Esophagus muscularis mucosa (tissue), 4 donors: ENCODE measurements at regions of chr12 and their contacts with region 1.

Region 1: GRCh38 chr12:29241821-29242591 is 92.9 kb downstream of the FAR2 start:
- DNase-seq: no peak
- H3K4me3 ChIP-seq: no peak overlapping the region
- H3K27ac ChIP-seq: peak overlapping the region; percentile 67 to 79 (median 74)
- H3K4me1 ChIP-seq: peaks cover 18 to 39% (median 37%) of the 10 kb centered on the region in 4 donors
- H3K27me3 ChIP-seq: no peaks in the 10 kb centered on the region
- CTCF ChIP-seq: peak in 2 of 3 experiments; percentile 20 to 44
- EP300 ChIP-seq: no peak
- POLR2A ChIP-seq: no peak

Region 2: GRCh38 chr12:29148911-29149690 is 92.9 kb before region 1 on chr12 and contains the start of gene FAR2:
- intact Hi-C with region 1: loop called (anchors 5 kb)
- DNase-seq: no peak
- H3K4me3 ChIP-seq: peak within 1 kb of the TSS; percentile 81 to 91 (median 88)
- H3K27ac ChIP-seq: peak within 1 kb of the TSS; percentile 84 to 90 (median 88)
- H3K4me1 ChIP-seq: peaks cover 4 to 45% (median 42%) of the 10 kb centered on the region in 4 donors
- H3K27me3 ChIP-seq: no peaks in the 10 kb centered on the region
- CTCF ChIP-seq: no peak
- EP300 ChIP-seq: no peak
- POLR2A ChIP-seq: no peak
- total RNA-seq, gene FAR2: 11.6 to 15.0 (median 11.9) TPM

Region 3: GRCh38 chr12:29317556-29318363 is 75.8 kb after region 1 on chr12:
- intact Hi-C with region 1: no loop called
- DNase-seq: no peak
- H3K4me3 ChIP-seq: no peak overlapping the region
- H3K27ac ChIP-seq: no peak overlapping the region
- H3K4me1 ChIP-seq: peaks cover 0 to 20% (median 13%) of the 10 kb centered on the region in 4 donors
- H3K27me3 ChIP-seq: no peaks in the 10 kb centered on the region
- CTCF ChIP-seq: peak; percentile 67 to 89 (median 74)
- EP300 ChIP-seq: no peak
- POLR2A ChIP-seq: no peak